A549 (cell line): ENCODE measurements at regions of chr2 and their contacts with region 1.

Region 1: DNA sequence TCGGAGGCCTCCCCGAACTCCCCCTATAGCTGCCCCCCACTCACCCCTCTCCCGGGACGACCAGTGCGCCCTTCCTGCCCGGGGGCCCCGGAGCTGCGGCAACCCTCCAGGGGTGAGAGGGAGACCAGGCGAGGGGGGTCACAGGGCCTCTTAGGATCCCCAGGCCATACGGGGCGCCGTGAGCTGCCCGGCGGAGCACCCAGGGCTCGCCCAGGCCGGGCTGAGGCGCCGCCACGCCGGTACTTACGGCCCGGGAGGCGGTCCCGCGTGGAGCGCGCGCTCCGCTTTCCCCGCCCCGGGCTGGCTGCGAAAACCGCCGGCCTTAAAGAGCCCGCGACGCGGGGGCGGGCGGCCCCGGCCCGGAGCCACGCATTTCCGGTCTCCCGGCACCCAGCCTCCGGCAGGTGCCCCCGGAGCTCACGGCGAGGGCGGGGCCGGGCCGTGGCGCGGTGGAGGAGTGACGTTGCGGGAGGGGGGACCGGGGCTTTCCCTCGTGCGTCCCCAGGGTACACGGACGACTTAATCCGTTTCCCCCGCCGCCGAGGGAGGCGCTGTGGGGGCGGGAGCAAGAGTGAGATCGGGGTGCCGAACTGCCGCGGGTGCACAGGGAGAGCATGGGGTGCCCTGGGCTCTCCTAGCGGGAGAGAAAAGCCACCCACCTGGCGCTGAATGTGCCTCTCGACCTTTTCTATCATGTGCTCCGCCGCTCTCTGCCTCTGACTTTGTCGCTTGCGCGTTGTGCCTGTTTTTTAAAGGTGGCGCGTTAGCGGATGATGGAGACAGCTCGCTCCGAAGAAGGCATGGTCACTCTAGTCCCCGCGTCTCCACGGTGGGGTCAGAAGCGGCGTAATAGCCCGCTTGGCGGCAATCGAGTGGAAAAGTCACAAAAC is at the start of gene METTL21A:
- DNase-seq: peak; percentile 92 to 93
- ATAC-seq: peak; percentile 77 to 80
- H3K4me3 ChIP-seq: peak within 1 kb of the TSS; percentile 82
- H3K27ac ChIP-seq: peak within 1 kb of the TSS; percentile 98 to 99
- H3K4me1 ChIP-seq: peaks cover 13% of the 10 kb centered on the region
- CTCF ChIP-seq: peak; percentile 43; the same call in 2 of the 3 replicates
- EP300 ChIP-seq: no peak
- POLR2A ChIP-seq: peak; percentile 80
- RAD21 ChIP-seq: no peak; a peak in 1 of 5 replicates
- polyA plus RNA-seq, gene METTL21A: 31.1 and 40.1 TPM in 2 replicates

Region 2: DNA sequence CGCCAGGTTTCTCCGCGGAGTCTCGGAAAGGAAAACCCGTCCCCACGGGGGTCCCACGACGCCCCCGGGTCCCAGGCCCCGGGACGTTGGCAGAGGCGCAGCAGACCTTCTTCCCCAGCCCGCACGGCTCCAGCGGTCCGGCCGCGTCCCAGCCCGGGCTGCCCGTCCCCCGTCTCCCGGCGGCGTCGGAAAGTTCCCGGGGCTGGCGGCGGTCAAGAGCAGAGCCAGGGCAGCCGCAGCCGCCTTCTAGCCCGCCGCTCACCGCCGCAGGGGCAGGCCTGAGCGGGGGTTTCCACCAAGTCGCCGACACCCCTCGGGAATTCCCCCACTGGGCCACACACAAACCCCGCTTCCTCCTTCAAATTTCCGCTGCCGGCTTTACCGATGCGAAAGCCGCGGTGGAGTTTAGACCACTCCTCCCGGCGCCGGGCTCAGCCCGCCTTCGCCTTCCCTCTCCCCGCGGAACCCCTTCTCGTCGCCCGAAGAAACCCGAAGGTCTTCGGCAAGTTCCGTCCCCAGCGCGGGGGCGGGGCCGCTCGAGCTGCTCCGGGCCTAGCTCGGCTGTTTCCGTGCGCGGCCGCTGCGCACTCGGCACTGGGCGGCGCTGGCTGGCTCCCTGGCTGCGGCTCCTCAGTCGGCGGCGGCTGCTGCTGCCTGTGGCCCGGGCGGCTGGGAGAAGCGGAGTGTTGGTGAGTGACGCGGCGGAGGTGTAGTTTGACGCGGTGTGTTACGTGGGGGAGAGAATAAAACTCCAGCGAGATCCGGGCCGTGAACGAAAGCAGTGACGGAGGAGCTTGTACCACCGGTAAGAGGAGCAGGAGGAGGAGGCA is 95.7 kb before region 1 on chr2 and contains the start of gene CREB1:
- CTCF ChIA-PET with region 1: interaction called, 4 read pairs
- POLR2A ChIA-PET with region 1: interaction called, 34 read pairs
- DNase-seq: peak; percentile 86 to 98
- ATAC-seq: peak; percentile 88 to 96
- H3K4me3 ChIP-seq: peak within 1 kb of the TSS; percentile 75
- H3K27ac ChIP-seq: peak within 1 kb of the TSS; percentile 90 to 97
- H3K4me1 ChIP-seq: peaks cover 39% of the 10 kb centered on the region
- CTCF ChIP-seq: no peak
- EP300 ChIP-seq: no peak
- POLR2A ChIP-seq: peak; percentile 82
- RAD21 ChIP-seq: no peak; a peak in 1 of 5 replicates
- polyA plus RNA-seq, gene CREB1: 42.4 and 42.5 TPM in 2 replicates

Region 3: GRCh38 chr2:207676827-207677354 is 51.6 kb after region 1 on chr2:
- CTCF ChIA-PET with region 1: interaction called, 10 read pairs
- POLR2A ChIA-PET with region 1: interaction called, 3 read pairs
- DNase-seq: peak; percentile 40 to 55
- ATAC-seq: peak; percentile 74 to 86; a peak in 5 of 6 replicates
- H3K4me3 ChIP-seq: no peak overlapping the region
- H3K27ac ChIP-seq: peak overlapping the region; percentile 71 to 86
- H3K4me1 ChIP-seq: peaks cover 15% of the 10 kb centered on the region
- CTCF ChIP-seq: no peak
- EP300 ChIP-seq: no peak
- POLR2A ChIP-seq: no peak
- RAD21 ChIP-seq: no peak

Region 4: DNA sequence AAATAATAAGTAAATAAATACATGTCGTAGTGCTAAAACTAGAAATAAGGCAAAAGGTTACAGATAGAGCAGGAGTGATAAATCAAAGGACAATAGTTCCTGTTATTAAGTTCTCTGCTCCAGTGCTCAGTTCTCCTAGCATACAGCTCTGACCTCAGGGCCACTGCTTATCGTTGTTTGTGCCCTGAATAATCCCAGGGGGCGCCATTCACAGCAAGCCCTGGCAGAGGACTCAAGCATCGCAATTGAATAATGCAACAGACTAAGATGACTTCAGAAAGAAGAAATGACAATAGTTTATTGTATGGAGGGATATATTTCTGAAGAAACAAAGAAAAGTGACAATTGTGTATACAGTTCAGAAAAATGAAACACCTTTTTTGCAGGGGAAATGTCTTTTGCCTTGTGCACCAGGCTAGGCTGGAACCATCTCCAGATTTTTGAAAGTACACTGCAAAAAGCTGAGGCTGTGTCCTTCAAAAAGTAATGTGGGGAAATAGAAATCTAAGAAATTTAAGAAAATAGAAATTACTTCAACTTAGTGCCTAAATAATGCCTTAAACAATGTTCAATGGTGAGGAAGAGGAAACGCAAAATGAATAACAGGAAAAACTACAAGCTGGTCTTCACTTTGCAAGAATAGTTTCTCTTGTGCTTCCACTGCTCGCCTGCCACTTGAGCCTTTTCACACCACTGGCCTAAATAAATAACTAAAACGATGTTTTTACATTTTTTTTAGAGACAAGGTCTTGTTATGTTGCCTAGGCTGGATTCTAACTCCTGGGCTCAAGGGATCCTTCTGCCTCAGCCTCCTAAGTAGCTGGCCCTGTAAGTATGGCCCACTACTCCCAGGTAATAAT is 67.2 kb after region 1 on chr2:
- CTCF ChIA-PET with region 1: interaction called, 21 read pairs
- POLR2A ChIA-PET with region 1: no interaction called
- DNase-seq: peak; percentile 50 to 74
- ATAC-seq: peak; percentile 71 to 89; a peak in 5 of 6 replicates
- H3K4me3 ChIP-seq: no peak overlapping the region
- H3K27ac ChIP-seq: peak overlapping the region in 1 of 2 experiments; percentile 12; a peak in 1 of 6 replicates
- H3K4me1 ChIP-seq: peaks cover 20% of the 10 kb centered on the region
- CTCF ChIP-seq: peak; percentile 58
- EP300 ChIP-seq: no peak
- POLR2A ChIP-seq: no peak
- RAD21 ChIP-seq: peak; percentile 32 to 63; a peak in 4 of 5 replicates

Region 5: GRCh38 chr2:207710814-207711740 is 85.8 kb after region 1 on chr2 and contains the start of gene CCNYL1:
- CTCF ChIA-PET with region 1: interaction called, 66 read pairs
- POLR2A ChIA-PET with region 1: interaction called, 49 read pairs
- DNase-seq: peak; percentile 99
- ATAC-seq: peak; percentile 96 to 98
- H3K4me3 ChIP-seq: peak within 1 kb of the TSS; percentile 85
- H3K27ac ChIP-seq: peak within 1 kb of the TSS; percentile 84 to 94
- H3K4me1 ChIP-seq: peaks cover 31% of the 10 kb centered on the region
- CTCF ChIP-seq: no peak
- EP300 ChIP-seq: no peak
- POLR2A ChIP-seq: peak; percentile 41; the same call in 1 of the 2 replicates
- RAD21 ChIP-seq: peak in 1 of 2 experiments; percentile 4; a peak in 1 of 5 replicates
- polyA plus RNA-seq, gene CCNYL1: 31.6 and 38.7 TPM in 2 replicates

Region 6: DNA sequence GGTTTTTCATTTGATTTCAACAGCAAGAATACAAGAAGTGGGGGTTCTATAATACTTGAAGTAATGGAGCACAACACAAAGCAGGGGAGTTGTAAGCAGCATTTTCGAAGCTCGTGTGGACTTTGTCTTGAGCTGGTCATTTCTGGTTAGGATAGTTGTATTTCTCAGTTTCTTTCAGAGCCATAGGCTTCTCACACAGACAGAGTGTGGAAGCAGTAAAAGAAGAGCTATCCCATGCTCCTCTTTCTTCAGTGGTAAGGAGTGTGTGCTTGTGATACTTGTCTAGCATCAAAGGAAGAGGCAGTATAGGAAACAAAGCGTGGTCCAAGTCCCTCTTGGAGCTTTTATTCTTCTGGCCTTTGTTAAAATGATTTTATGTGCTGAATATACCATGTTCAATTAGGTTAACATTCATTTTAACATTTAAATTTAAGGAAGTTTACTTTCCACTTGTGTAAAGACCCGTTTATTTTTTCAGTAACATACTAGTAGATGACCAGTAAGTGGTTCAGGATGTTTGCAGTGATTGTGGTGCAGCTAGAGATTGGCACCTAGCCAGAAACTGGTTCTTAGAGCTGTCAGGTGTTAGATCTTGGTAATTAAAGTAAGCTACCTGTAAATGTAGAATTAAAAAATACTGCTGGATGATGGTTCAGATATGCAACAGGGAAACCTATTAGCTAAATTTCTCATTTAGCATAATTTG is 100.8 kb after region 1 on chr2:
- CTCF ChIA-PET with region 1: interaction called, 54 read pairs
- POLR2A ChIA-PET with region 1: interaction called, 7 read pairs
- DNase-seq: peak in 1 of 2 experiments; percentile 31
- ATAC-seq: peak; percentile 52 to 56; a peak in 5 of 6 replicates
- H3K4me3 ChIP-seq: no peak overlapping the region
- H3K27ac ChIP-seq: peak overlapping the region; percentile 28 to 74; a peak in 4 of 6 replicates
- H3K4me1 ChIP-seq: peaks cover 61% of the 10 kb centered on the region
- CTCF ChIP-seq: no peak
- EP300 ChIP-seq: no peak
- POLR2A ChIP-seq: no peak
- RAD21 ChIP-seq: no peak

Region 7: GRCh38 chr2:207807516-207807915 is 182.3 kb after region 1 on chr2:
- CTCF ChIA-PET with region 1: no interaction called
- POLR2A ChIA-PET with region 1: no interaction called
- DNase-seq: no peak
- ATAC-seq: no peak
- H3K4me3 ChIP-seq: no peak overlapping the region
- H3K27ac ChIP-seq: peak overlapping the region in 1 of 2 experiments; percentile 34; a peak in 2 of 6 replicates
- H3K4me1 ChIP-seq: peaks cover 45% of the 10 kb centered on the region
- CTCF ChIP-seq: no peak
- EP300 ChIP-seq: no peak
- POLR2A ChIP-seq: no peak
- RAD21 ChIP-seq: no peak

Region 8: GRCh38 chr2:207939342-207940108 is 314.3 kb after region 1 on chr2:
- CTCF ChIA-PET with region 1: no interaction called
- POLR2A ChIA-PET with region 1: no interaction called
- DNase-seq: no peak
- ATAC-seq: 0 out of 6 replicates have a peak, but pooled peaks of 1 of the 2 experiments have one; percentile 30
- H3K4me3 ChIP-seq: no peak overlapping the region
- H3K27ac ChIP-seq: no peak overlapping the region
- H3K4me1 ChIP-seq: peaks cover 10% of the 10 kb centered on the region
- CTCF ChIP-seq: no peak
- EP300 ChIP-seq: no peak
- POLR2A ChIP-seq: no peak
- RAD21 ChIP-seq: no peak

Region 9: DNA sequence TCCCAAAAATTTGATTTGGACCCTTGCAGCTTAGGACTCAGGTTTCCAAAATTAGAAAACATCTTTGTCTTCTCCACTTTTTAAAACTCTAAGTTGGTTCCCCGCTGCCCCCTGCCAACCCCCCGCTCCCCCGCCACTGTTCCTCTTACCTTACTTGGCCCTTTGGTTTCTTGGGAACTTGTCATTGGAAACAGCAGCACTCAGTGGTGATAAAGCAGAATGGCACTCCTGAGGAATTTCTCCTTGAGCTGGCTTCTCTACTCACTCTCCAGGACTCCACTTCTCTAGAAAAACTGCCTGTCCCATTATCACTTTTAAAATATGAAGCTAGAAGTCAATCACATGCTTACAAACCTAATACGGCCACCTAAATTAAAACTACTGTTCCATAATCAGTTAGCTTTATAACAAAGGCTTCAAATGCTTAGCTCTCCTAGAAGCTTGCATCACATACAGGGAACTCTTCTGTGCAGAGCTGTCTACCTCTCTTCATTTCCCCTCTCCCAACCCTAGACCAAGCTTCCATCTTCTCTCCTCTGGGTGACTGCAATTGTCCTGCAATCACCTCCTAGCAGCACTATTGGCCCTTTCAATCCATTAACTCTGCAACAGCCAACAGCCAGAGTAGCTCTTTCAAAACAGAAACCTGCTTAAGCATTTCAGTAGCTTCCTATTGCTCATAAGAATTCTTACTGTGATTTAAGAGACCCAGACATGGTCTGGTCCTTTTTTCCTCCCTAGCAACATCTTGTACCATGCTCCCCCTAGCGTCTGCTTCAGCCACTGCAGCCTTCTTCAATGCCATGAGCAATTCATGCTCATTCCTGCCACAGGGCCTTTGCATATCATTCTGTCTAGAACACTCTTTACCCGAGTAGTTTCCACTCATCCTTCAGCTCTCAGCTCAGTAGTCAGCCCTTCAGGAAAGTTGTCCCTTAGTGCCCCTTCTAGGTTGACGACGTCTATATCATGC is 415.2 kb after region 1 on chr2:
- CTCF ChIA-PET with region 1: interaction called, 11 read pairs
- POLR2A ChIA-PET with region 1: no interaction called
- DNase-seq: peak; percentile 53 to 78
- ATAC-seq: peak; percentile 90 to 91
- H3K4me3 ChIP-seq: no peak overlapping the region
- H3K27ac ChIP-seq: no peak overlapping the region; a peak in 1 of 6 replicates
- H3K4me1 ChIP-seq: no peaks in the 10 kb centered on the region
- CTCF ChIP-seq: peak; percentile 68
- EP300 ChIP-seq: no peak
- POLR2A ChIP-seq: no peak
- RAD21 ChIP-seq: peak; percentile 58 to 76